ENCODE measurements at regions of chr20 and their contacts with region 1.

Region 1: GRCh38 chr20:45362804-45363610 is at the start of gene SYS1:
- DNase-seq: peak; percentile 99
- ATAC-seq: peak; percentile 93
- H3K4me3 Mint-ChIP-seq: peak within 1 kb of the TSS; percentile 95
- H3K27ac Mint-ChIP-seq: peak within 1 kb of the TSS; percentile 98
- H3K4me1 Mint-ChIP-seq: peaks cover 43% of the 10 kb centered on the region
- H3K27me3 Mint-ChIP-seq: no peaks in the 10 kb centered on the region
- total RNA-seq, gene SYS1: 16.1 to 26.1 TPM

Region 2: DNA sequence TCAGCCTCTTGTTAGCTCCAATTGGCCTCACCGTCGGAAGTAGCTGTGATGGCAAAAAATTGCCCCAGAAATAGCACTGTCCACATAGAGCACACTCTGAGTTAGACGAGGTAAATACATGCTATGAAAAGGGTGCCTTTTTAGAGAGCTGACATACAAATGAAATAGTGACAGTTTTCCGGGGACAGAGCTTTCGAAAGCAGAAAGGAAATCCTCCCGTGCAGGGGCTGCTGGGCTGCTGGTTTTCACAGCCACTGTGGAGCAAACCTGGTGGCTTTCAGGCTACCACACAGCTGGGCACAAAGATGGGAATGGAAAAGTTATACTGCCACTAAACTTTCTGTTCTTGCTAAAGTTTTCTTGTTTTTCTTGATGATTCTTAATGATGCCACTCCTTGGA is 116.9 kb before region 1 on chr20:
- CTCF ChIA-PET with region 1: no interaction called
- POLR2A ChIA-PET with region 1: no interaction called
- intact Hi-C with region 1: no loop called
- DNase-seq: no peak
- ATAC-seq: no peak
- H3K4me3 Mint-ChIP-seq: no peak overlapping the region
- H3K27ac Mint-ChIP-seq: no peak overlapping the region
- H3K4me1 Mint-ChIP-seq: no peaks in the 10 kb centered on the region
- H3K27me3 Mint-ChIP-seq: peaks cover 47% of the 10 kb centered on the region

Region 3: DNA sequence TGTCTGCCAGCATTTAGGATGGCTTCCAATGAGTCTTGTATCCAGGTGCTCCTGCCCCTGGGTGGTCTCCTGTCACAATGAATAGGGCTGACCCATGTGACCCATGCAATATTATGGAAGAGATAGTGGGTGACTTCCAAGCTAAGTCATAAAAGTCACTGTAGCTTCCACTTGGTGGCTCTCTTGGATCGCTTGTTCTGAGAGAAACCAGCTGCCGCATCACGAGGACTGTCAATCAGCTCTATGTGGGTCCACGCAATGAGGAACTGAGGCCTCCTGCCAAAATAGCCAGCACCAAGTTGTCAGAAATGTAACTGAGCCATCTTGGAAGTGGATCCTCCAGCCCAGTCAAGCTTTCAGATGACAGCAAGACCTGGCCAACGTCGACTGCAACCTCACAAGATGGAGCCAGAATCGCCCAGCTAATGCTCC is 40.0 kb before region 1 on chr20:
- CTCF ChIA-PET with region 1: interaction called, 15 read pairs
- POLR2A ChIA-PET with region 1: no interaction called
- intact Hi-C with region 1: loop called (anchors 2 kb)
- DNase-seq: no peak
- ATAC-seq: no peak
- H3K4me3 Mint-ChIP-seq: no peak overlapping the region
- H3K27ac Mint-ChIP-seq: no peak overlapping the region
- H3K4me1 Mint-ChIP-seq: peaks cover 24% of the 10 kb centered on the region
- H3K27me3 Mint-ChIP-seq: no peaks in the 10 kb centered on the region

Region 4: DNA sequence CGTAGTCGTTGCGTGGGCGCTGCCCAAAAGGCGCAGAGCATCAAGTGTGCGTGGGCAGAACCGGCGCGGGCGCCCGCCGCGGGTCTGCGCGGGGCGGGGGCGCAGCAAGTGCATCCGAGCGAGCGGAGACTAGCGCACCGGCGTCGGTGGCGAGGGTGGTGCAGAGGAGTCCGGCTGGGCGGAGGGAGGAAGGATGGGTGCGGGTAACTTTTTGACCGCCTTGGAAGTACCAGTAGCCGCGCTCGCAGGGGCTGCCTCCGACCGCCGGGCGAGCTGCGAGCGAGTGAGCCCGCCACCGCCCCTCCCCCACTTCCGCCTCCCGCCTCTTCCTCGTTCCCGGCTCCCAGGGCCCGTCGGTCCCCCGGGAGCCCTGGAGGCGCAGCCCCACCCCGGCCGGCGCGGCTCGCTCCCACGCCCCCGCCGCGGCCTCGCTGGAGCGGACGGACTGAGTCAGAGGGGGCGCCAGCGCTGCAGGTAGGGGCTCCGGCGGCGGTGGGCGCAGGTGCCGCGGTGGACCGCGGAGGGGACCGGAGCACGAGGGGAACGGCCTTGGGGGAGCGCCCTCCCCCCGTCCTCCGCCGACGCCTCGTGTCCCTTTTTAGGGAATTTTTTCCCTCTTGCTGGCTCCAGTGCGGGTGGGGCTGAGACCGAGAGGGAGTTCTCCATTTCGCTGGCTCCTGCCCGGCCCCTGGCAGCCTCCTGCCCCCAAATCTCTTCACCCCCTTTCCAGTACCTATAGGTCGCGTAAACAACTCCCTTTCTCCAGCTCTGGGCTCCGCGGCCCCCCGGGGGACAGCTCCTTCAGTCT is 43.5 kb after region 1 on chr20:
- CTCF ChIA-PET with region 1: interaction called, 10 read pairs
- POLR2A ChIA-PET with region 1: interaction called, 3 read pairs
- intact Hi-C with region 1: loop called in 1 of 2 experiments (anchors 2 kb)
- DNase-seq: peak; percentile 69
- ATAC-seq: peak; percentile 51
- H3K4me3 Mint-ChIP-seq: peak overlapping the region; percentile 73
- H3K27ac Mint-ChIP-seq: peak overlapping the region; percentile 69
- H3K4me1 Mint-ChIP-seq: peaks cover 22% of the 10 kb centered on the region
- H3K27me3 Mint-ChIP-seq: peaks cover 3% of the 10 kb centered on the region

Region 5: DNA sequence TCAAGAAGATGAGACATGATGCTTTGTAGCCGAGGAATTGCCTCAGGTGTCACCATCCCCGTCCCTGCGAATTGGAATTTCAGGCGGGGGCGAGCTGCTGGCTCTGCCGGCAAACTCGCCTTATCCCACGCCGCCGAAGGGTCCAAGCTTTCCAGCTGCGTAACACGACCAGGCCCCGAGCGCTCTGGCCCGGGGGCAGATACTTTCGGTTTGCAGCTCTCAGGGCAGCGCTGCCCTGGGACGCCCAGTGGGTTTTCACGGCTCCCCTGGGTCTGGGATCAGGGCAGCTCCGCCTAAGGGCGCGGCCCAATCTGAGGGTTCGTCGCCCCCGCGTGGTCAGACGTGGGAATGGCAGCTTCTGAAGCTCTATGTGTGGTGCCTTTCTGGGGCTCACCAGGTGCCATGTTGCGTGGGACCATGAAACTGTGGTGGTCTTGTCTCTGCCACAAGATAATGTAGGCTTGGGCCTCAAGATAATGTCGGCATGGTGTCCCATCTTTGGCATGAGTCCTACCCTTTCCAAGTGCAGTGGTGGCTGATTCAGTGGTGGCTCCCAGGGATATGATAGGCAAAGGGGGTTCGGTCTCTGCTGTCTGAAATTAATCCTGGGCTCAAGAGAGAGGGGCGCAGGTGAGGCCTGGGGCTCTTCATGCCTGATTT is 73.9 kb after region 1 on chr20:
- CTCF ChIA-PET with region 1: interaction called, 189 read pairs
- POLR2A ChIA-PET with region 1: interaction called, 10 read pairs
- intact Hi-C with region 1: loop called (anchors 1 kb)
- DNase-seq: peak; percentile 91
- ATAC-seq: peak; percentile 99
- H3K4me3 Mint-ChIP-seq: peak overlapping the region; percentile 69
- H3K27ac Mint-ChIP-seq: no peak overlapping the region
- H3K4me1 Mint-ChIP-seq: peaks cover 17% of the 10 kb centered on the region
- H3K27me3 Mint-ChIP-seq: no peaks in the 10 kb centered on the region

Region 6: DNA sequence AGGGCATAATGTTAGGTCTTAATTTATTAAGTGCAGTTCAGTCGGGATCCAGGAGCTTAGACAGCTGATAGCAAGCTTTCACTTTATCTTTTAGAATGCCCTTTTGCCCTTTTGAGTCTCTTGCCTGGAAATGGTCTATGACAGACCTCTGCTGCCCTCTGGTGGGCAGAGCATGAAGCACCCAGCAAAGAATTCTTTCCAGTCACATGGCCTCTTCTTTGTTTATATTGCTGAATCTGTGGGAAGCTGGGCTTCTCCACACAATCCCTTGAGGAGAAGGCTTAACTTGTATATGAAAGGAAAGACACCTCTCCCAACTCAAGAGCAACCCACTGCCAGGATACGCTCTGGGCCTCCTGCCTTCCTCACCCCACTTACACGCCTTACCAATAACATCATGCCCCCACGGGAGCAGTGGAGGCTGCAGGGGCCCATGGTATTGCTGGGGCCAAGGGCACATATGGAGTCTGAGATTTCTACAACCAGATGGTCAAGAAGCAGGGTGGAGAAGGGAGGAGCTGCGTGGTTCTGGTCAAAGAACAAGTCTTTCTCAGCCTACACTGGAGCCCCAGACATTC is 408.3 kb after region 1 on chr20:
- CTCF ChIA-PET with region 1: interaction called, 9 read pairs
- POLR2A ChIA-PET with region 1: no interaction called
- intact Hi-C with region 1: loop called (anchors 5 kb)
- DNase-seq: peak; percentile 88
- ATAC-seq: peak; percentile 75
- H3K4me3 Mint-ChIP-seq: no peak overlapping the region
- H3K27ac Mint-ChIP-seq: no peak overlapping the region
- H3K4me1 Mint-ChIP-seq: peaks cover 4% of the 10 kb centered on the region
- H3K27me3 Mint-ChIP-seq: peaks cover 12% of the 10 kb centered on the region

Region 7: DNA sequence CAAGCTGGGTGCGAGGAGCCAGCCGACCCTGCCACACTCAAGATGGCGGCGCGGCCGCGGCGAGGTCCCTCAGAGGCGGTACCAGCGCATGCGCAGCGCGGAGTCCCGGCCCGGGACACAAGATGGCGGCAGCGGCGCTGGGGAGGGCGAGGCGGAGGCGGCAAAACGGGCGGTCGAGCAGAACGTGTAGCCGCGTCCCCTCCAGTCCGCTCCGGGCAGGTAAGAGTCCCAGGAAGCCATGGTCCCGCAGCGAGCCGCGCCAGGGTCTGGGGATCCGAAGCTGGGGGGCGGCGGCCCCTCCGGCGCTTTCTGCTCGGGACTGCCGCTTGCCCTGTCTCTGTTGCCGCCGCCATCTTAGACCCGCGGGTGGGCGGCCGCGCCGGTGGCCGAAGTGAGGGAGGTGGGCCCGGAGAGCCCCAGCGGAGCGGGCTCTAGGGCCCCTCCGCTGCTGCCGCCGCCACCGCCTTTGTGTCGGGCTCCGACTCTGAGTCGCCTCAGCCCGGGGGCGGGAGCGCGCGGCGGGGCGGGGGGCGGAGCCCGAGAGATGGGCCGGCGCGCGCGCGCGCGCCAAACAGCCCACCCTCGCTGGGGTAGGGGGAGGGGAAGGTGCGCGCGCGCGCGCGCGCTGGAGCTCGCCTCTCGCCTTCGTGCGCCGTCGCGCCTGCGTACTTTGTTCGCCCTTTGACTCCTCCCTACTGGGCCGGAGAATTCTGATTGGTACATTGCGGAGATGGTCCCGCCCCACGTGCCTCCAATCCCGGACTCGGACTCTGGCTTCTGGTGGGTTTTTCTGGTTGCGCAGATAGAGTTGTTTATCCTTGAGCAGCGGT is 571.8 kb after region 1 on chr20 and contains the start of gene PCIF1:
- CTCF ChIA-PET with region 1: no interaction called
- POLR2A ChIA-PET with region 1: no interaction called
- intact Hi-C with region 1: loop called in 1 of 2 experiments (anchors 1 kb)
- DNase-seq: peak; percentile 99
- ATAC-seq: peak; percentile 84
- H3K4me3 Mint-ChIP-seq: peak within 1 kb of the TSS; percentile 97
- H3K27ac Mint-ChIP-seq: peak within 1 kb of the TSS; percentile 99
- H3K4me1 Mint-ChIP-seq: peaks cover 27% of the 10 kb centered on the region
- H3K27me3 Mint-ChIP-seq: no peaks in the 10 kb centered on the region
- total RNA-seq, gene PCIF1: 24.0 to 27.4 TPM

Measured in activated CD4-positive, alpha-beta T cell treated with anti-CD3 and anti-CD28 coated beads for 36 hours (primary cell).